ENCODE measurements at regions of chr9 and their contacts with region 1.

Region 1: DNA sequence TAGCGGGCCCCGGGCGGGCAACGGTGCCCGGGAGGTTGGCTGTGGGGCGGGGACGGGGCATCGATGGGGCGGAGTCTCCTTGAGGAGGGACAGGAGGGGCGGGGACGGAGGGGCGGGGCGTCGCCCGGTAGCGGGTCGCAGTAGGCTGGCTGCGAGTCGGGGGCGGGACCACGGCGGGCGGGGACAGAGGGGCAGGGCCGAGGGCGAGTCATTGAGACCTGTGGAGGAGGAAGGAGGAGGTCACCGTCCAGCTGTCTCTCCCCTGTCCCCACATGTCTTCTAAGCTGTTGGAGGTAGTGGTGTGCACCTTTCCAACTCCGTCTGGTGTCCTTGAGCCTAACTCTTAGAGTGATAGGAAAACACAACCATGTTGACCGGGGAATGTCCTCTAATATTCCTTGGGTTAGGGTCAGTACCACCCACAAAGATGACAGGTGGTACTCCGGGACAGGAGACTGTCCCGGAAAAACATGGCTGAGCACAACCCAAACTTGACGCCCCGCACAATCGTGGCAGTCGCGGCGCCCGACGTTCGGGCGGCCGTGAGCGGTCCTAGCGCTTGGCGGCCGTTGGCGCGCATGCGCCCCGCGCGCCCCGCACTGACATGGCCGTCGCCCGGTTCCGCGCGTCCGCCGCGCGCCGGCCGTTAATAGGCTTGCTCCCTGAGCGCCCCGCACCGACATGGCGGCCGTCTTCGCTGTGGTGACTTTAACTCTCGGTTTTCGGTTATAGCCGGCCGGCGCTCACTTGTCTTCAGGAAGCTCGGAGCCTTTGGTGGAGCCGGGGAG is at the starts of genes CRAT and PTPA:
- DNase-seq: peak; percentile 63
- ATAC-seq: peak; percentile 95
- H3K4me3 ChIP-seq: peak within 1 kb of the TSS; percentile 98
- H3K27ac ChIP-seq: peak within 1 kb of the TSS; percentile 92
- H3K4me1 ChIP-seq: peaks cover 7% of the 10 kb centered on the region
- H3K27me3 ChIP-seq: no peaks in the 10 kb centered on the region; a peak in 1 of 4 replicates
- CTCF ChIP-seq: no peak
- EP300 ChIP-seq: no peak
- POLR2A ChIP-seq: peak; percentile 95
- RAD21 ChIP-seq: no peak
- polyA plus RNA-seq, gene CRAT: 0.10 to 0.47 TPM
- polyA plus RNA-seq, gene PTPA: 1.6 to 3.2 TPM

Region 2: DNA sequence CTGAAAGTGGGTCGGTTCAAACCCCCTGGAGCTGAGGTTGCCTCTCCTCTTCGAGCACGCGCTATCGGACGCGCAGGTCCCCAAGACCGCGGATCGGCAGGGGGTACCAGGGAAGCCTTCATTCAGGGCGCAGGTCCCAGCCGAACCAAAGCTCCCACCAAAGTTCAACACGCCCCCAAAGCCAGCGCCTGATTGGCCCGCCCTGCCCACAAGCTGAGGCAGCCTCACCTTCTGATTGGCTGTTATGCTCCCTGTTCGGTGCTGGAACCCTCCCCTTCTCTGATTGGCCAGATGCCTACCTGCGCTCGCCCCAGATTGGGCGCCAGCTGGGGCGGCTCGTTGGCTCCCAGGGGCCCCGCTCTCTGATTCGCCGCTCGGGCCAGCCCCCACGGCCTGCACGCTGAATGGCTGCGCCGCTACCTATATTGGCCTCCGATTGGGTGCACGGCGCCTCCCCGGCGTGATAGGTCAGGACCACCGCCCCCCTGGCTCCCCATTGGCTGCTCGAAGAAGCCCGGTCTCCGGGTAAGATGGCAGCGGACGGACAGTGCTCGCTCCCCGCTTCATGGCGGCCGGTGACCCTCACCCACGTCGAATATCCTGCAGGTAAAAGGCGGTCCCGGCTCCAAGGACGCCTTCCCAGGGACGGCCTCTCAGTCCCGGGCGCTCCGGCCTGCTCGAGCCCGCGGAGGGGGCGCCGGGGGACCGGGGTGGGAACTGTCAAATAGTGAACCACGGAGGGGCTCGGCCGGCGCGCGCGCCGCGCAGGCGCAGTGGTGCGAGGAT is 30.1 kb before region 1 on chr9 and contains the start of gene DOLPP1:
- CTCF ChIA-PET with region 1: interaction called, 3 read pairs
- POLR2A ChIA-PET with region 1: no interaction called
- RAD21 ChIA-PET with region 1: no interaction called
- SMC1A ChIA-PET with region 1: no interaction called
- in situ Hi-C with region 1: no loop called
- intact Hi-C with region 1: loop called (anchors 2 kb)
- DNase-seq: peak; percentile 96
- ATAC-seq: peak; percentile 98
- H3K4me3 ChIP-seq: peak within 1 kb of the TSS; percentile 93
- H3K27ac ChIP-seq: peak within 1 kb of the TSS; percentile 54
- H3K4me1 ChIP-seq: peaks cover 12% of the 10 kb centered on the region
- H3K27me3 ChIP-seq: no peaks in the 10 kb centered on the region
- CTCF ChIP-seq: no peak
- EP300 ChIP-seq: no peak
- POLR2A ChIP-seq: peak; percentile 97
- RAD21 ChIP-seq: no peak
- polyA plus RNA-seq, gene DOLPP1: 0.76 to 3.5 TPM

Region 3: GRCh38 chr9:129125476-129125875 is 14.5 kb after region 1 on chr9:
- CTCF ChIA-PET with region 1: interaction called, 32 read pairs
- POLR2A ChIA-PET with region 1: interaction called, 14 read pairs
- RAD21 ChIA-PET with region 1: interaction called, 7 read pairs
- SMC1A ChIA-PET with region 1: interaction called, 11 read pairs
- in situ Hi-C with region 1: no loop called
- intact Hi-C with region 1: no loop called
- DNase-seq: no peak
- ATAC-seq: peak; percentile 97
- H3K4me3 ChIP-seq: no peak overlapping the region
- H3K27ac ChIP-seq: no peak overlapping the region
- H3K4me1 ChIP-seq: peaks cover 3% of the 10 kb centered on the region; the same call in 1 of the 2 replicates
- H3K27me3 ChIP-seq: no peaks in the 10 kb centered on the region
- CTCF ChIP-seq: no peak
- EP300 ChIP-seq: no peak
- POLR2A ChIP-seq: no peak
- RAD21 ChIP-seq: no peak

Region 4: GRCh38 chr9:129193661-129194060 is 82.7 kb after region 1 on chr9:
- CTCF ChIA-PET with region 1: no interaction called
- POLR2A ChIA-PET with region 1: no interaction called
- RAD21 ChIA-PET with region 1: no interaction called
- SMC1A ChIA-PET with region 1: no interaction called
- in situ Hi-C with region 1: no loop called
- intact Hi-C with region 1: no loop called
- DNase-seq: no peak
- ATAC-seq: no peak
- H3K4me3 ChIP-seq: no peak overlapping the region
- H3K27ac ChIP-seq: no peak overlapping the region
- H3K4me1 ChIP-seq: no peaks in the 10 kb centered on the region
- H3K27me3 ChIP-seq: peaks cover 0 to 5% of the 10 kb centered on the region in 2 experiments; a peak in 3 of 4 replicates
- CTCF ChIP-seq: no peak
- EP300 ChIP-seq: no peak
- POLR2A ChIP-seq: no peak
- RAD21 ChIP-seq: no peak

Measured in GM12878 (cell line).